Activated CD4-positive, alpha-beta T cell treated with anti-CD3 and anti-CD28 coated beads for 36 hours (primary cell): ENCODE measurements at regions of chr1 and their contacts with region 1.

Region 1: DNA sequence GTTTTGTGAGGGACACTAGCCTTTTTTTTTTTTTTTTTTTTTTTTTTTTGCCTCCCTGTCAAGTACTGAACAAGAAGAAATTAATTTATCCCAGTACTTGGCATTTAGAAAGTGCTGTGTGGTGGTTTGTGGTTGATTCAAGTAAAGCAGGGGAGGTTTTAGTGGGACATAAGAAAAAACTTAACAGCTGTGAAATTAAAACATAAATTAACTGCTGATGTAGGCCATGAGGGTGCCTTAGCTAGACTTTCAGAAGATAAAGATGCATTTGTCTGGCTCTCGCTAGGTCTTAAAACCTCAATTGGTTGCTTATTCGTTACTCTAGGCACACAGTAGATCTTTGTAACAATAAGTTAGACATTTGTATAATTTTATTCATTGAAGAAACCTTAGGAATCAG is 52.3 kb downstream of the SPATA46 start:
- DNase-seq: no peak
- ATAC-seq: no peak
- H3K4me3 Mint-ChIP-seq: no peak overlapping the region
- H3K27ac Mint-ChIP-seq: no peak overlapping the region
- H3K4me1 Mint-ChIP-seq: no peaks in the 10 kb centered on the region
- H3K27me3 Mint-ChIP-seq: peaks cover 7% of the 10 kb centered on the region

Region 2: GRCh38 chr1:162502928-162503327 is 178.5 kb after region 1 on chr1:
- CTCF ChIA-PET with region 1: no interaction called
- POLR2A ChIA-PET with region 1: interaction called, 13 read pairs
- intact Hi-C with region 1: no loop called
- DNase-seq: no peak
- ATAC-seq: no peak
- H3K4me3 Mint-ChIP-seq: no peak overlapping the region
- H3K27ac Mint-ChIP-seq: no peak overlapping the region
- H3K4me1 Mint-ChIP-seq: peaks cover 29% of the 10 kb centered on the region
- H3K27me3 Mint-ChIP-seq: no peaks in the 10 kb centered on the region